H1 (cell line): ENCODE measurements at regions of chr1 and their contacts with region 1.

Region 1: GRCh38 chr1:225962440-225962975 is 21.5 kb upstream of the LEFTY2 start:
- DNase-seq: peak in 1 of 2 experiments; percentile 99
- H3K4me3 ChIP-seq: no peak overlapping the region
- H3K27ac ChIP-seq: no peak overlapping the region
- H3K4me1 ChIP-seq: no peaks in the 10 kb centered on the region
- H3K27me3 ChIP-seq: no peaks in the 10 kb centered on the region
- CTCF ChIP-seq: peak; percentile 93 to 98 (median 96)
- EP300 ChIP-seq: no peak
- POLR2A ChIP-seq: no peak
- RAD21 ChIP-seq: peak; percentile 75 to 86

Region 2: DNA sequence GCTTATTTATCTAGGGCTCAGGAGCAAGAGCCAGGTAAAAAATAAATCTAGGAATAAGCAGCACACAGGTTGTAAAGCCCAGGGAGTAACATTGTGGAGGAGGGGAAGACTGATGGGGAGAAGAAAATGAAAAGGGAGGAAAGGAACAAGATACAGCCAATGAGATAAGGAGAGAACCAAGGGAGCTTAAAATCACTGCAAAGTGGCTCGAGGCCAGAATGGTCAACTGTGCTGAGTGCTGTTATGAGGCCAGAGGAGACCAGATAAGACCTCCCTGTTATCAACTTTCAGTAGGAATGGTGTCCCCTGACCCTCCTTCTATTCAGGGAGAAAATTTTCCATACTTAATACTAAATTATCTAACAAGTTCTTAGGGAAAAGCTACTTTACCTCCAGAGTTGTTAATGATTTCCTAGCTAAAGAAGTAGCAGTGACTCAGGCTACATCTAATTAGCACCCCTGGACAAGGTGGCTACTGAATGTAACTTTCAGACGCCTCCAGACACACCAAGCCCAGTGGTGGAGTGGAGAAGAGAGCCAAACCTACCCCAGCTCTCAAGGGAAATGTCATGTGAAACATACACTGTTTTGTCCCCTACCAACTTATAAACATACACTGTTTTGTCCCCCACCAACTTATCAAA is 335.1 kb before region 1 on chr1:
- CTCF ChIA-PET with region 1: no interaction called
- POLR2A ChIA-PET with region 1: no interaction called
- DNase-seq: no peak
- H3K4me3 ChIP-seq: no peak overlapping the region; a peak in 1 of 8 replicates
- H3K27ac ChIP-seq: no peak overlapping the region
- H3K4me1 ChIP-seq: peaks cover 0 to 7% (median under 1%) of the 10 kb centered on the region in 4 experiments; a peak in 3 of 7 replicates
- H3K27me3 ChIP-seq: no peaks in the 10 kb centered on the region
- CTCF ChIP-seq: no peak
- EP300 ChIP-seq: no peak
- POLR2A ChIP-seq: no peak
- RAD21 ChIP-seq: no peak

Region 3: DNA sequence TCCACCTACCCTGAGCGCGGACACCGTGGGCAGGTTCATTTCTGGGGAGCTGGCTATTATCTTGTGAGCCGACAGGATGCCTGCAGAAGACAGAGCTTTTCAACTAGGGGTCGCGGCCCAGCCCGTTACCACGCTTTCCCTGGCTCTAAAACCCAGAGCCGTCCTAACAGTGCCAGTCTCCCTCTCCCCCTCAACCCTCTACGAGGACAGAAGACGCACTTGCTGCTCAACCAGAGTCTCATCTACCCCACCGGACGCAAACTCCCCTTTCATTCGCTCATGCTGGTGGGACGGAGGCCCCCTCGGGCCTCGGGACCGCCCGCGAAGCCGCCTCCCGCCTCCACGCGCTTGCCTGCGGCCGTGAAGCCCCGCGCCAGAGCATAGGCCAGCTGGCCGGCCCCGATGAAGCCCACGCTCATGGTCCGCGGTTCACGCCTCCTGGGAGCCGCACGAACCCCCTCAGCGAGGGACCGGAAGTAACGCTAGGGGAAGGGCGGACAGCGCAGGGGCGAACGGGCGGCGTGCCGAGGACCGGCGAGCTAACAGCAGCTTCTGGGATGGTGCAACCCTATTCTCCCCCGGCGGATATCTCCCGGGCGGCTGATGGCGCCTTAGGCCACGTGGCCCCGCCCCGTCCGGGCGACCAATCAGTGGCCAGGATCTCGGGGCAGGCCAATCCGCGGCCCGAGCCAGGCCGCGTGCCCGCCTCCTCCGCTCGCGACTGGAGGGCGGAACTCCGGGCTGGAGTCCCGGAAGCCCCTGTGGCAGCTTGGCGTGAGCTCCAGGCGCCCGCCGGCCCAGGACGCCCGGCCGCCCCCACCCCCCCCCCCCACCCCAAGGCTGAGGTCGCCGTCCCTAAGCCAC is 38.6 kb before region 1 on chr1 and contains the start of gene PYCR2:
- CTCF ChIA-PET with region 1: interaction called, 16 read pairs
- POLR2A ChIA-PET with region 1: no interaction called
- DNase-seq: peak; percentile 88 to 92
- H3K4me3 ChIP-seq: peak within 1 kb of the TSS; percentile 91 to 97 (median 93)
- H3K27ac ChIP-seq: peak within 1 kb of the TSS; percentile 69
- H3K4me1 ChIP-seq: peaks cover 0 to 9% (median 5%) of the 10 kb centered on the region in 4 experiments; a peak in 4 of 7 replicates
- H3K27me3 ChIP-seq: no peaks in the 10 kb centered on the region
- CTCF ChIP-seq: peak in 1 of 3 experiments; percentile 7; a peak in 1 of 4 replicates
- EP300 ChIP-seq: no peak
- POLR2A ChIP-seq: peak in 1 of 2 experiments; percentile 87; a peak in 2 of 3 replicates
- RAD21 ChIP-seq: no peak; a peak in 1 of 4 replicates
- total RNA-seq, gene PYCR2: 84.3 and 84.6 TPM in 2 replicates

Region 4: GRCh38 chr1:225933072-225933471 is 29.4 kb before region 1 on chr1:
- CTCF ChIA-PET with region 1: interaction called, 14 read pairs
- POLR2A ChIA-PET with region 1: no interaction called
- DNase-seq: no peak
- H3K4me3 ChIP-seq: no peak overlapping the region
- H3K27ac ChIP-seq: no peak overlapping the region
- H3K4me1 ChIP-seq: no peaks in the 10 kb centered on the region
- H3K27me3 ChIP-seq: no peaks in the 10 kb centered on the region
- CTCF ChIP-seq: no peak
- EP300 ChIP-seq: no peak
- POLR2A ChIP-seq: no peak
- RAD21 ChIP-seq: no peak

Region 5: GRCh38 chr1:225944951-225945350 is 17.6 kb before region 1 on chr1:
- CTCF ChIA-PET with region 1: interaction called, 25 read pairs
- POLR2A ChIA-PET with region 1: interaction called, 4 read pairs
- DNase-seq: no peak
- H3K4me3 ChIP-seq: no peak overlapping the region
- H3K27ac ChIP-seq: no peak overlapping the region
- H3K4me1 ChIP-seq: peaks cover 6 to 22% (median 13%) of the 10 kb centered on the region in 4 experiments
- H3K27me3 ChIP-seq: peaks cover 0 to 14% (median 9%) of the 10 kb centered on the region in 4 experiments; a peak in 4 of 7 replicates
- CTCF ChIP-seq: no peak
- EP300 ChIP-seq: no peak
- POLR2A ChIP-seq: no peak
- RAD21 ChIP-seq: no peak

Region 6: GRCh38 chr1:225950905-225951497 is 11.5 kb before region 1 on chr1:
- CTCF ChIA-PET with region 1: interaction called, 25 read pairs
- POLR2A ChIA-PET with region 1: interaction called, 4 read pairs
- DNase-seq: peak in 1 of 2 experiments; percentile 88
- H3K4me3 ChIP-seq: no peak overlapping the region
- H3K27ac ChIP-seq: no peak overlapping the region
- H3K4me1 ChIP-seq: peaks cover 0 to 10% (median 3%) of the 10 kb centered on the region in 4 experiments; a peak in 6 of 7 replicates
- H3K27me3 ChIP-seq: peaks cover 0 to 7% (median 5%) of the 10 kb centered on the region in 4 experiments; a peak in 3 of 7 replicates
- CTCF ChIP-seq: no peak
- EP300 ChIP-seq: no peak
- POLR2A ChIP-seq: no peak
- RAD21 ChIP-seq: no peak

Region 7: DNA sequence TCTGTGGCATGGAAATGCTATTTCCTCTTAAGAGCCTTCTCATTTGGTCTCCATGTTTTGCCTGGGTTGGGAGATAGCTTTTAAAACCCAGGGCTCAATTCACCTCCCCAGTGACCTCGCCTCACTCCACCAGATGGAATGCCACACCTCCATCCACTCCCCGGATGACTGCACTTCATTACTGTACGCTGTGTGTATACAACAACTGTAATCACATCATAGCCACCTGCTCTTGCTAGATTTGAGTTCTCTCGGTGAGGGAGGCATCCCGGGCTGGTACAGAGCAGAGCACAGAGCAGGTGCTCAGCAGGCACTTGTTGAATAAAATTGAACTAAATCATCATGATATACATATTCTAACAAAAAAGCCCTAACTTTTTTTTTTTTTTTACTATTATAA is 10.7 kb after region 1 on chr1:
- CTCF ChIA-PET with region 1: interaction called, 86 read pairs
- POLR2A ChIA-PET with region 1: interaction called, 5 read pairs
- DNase-seq: no peak
- H3K4me3 ChIP-seq: no peak overlapping the region
- H3K27ac ChIP-seq: no peak overlapping the region
- H3K4me1 ChIP-seq: no peaks in the 10 kb centered on the region
- H3K27me3 ChIP-seq: no peaks in the 10 kb centered on the region
- CTCF ChIP-seq: no peak
- EP300 ChIP-seq: no peak
- POLR2A ChIP-seq: no peak
- RAD21 ChIP-seq: no peak

Region 8: DNA sequence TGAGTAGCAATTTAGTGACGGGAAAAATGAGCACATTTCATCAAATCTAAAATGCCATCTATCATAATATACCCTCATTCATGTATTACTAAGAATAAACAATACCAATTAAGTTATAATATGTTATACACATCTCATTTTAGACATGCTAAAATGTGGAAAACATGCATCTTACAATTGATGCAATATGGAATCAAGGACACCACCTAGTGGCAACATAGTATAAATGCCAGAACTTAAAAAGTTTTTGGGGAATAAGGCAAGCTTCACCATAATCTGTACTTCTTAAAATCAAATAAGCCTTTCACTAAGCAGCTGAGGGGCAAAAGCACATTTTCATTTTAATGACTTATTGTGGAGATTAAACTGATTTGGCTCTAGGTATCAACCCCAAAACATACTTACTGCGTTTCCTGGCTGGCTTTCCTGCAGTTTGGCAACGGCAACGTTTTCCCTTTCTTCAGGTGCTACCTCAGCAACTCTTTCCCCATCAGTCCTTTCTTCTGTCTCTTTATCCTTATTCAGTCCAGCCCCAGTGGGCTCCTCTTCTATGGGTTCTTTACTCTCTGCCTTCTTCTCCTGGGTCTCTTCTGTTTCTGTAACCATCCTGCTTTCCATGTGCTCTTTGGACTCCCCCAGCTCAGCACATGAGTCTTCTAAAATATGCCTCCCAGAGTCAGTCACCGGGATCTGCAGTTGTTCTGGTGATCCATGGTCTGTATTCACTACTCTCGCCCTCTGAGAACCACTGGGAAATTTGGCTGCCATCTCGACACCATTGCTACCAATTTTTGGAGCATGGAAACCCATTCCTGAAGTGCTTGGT is 25.2 kb after region 1 on chr1:
- CTCF ChIA-PET with region 1: interaction called, 29 read pairs
- POLR2A ChIA-PET with region 1: no interaction called
- DNase-seq: no peak
- H3K4me3 ChIP-seq: no peak overlapping the region
- H3K27ac ChIP-seq: no peak overlapping the region
- H3K4me1 ChIP-seq: no peaks in the 10 kb centered on the region
- H3K27me3 ChIP-seq: no peaks in the 10 kb centered on the region
- CTCF ChIP-seq: peak in 2 of 3 experiments; percentile 18 to 60; a peak in 2 of 4 replicates
- EP300 ChIP-seq: no peak
- POLR2A ChIP-seq: no peak
- RAD21 ChIP-seq: peak; percentile 30 to 35